Natural killer cell (primary cell): ENCODE measurements at regions of chr18 and their contacts with region 1.

Region 1: DNA sequence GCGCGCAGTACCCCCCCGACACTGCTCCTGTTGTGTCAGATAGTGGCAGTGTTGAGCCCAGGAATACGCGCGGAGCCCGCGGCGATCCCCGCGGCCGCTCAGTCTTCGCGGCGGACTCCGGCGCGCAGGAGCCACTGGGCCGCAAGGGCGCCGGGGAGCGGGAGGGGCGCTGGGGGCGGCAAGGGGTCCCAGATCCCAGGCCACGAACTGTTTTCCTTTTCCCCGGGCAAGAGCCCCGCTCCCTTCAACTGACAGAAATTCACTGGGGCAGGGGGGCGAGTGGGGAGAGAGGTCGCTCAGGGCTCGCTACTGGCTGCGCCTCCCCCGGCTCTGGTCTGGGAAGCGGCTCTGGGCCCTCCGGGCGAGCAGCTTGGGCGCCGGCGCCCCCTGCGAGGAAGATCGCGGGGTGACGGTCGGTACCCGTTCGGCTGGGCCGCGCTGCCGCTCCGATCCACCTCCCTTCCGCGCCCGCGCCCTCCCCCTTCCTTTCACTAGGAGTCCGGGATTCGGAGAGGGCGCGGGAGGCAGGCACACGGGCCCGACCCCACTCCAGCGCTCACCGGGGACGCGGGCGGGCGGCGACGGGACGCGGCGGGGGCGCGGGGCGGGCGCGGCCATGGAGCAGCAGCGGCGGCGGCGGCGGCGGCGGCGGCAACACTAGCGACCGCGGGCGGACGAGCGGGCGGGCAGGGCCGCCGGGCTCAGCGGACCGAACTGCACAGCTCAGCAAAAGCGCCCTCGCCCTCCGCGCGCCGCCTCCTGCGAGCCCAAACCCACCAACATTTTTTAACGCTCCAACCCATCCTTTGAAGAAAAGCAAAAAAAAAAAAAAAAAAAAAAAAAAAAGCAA is 1.4 kb upstream of the SETBP1 start:
- DNase-seq: peak; percentile 73 to 83
- ATAC-seq: peak; percentile 85 to 94 (median 90)
- H3K4me3 ChIP-seq: peak overlapping the region; percentile 76
- H3K4me3 Mint-ChIP-seq: no peak overlapping the region
- H3K27ac ChIP-seq: peak overlapping the region; percentile 87
- H3K27ac Mint-ChIP-seq: peak overlapping the region in 1 of 2 donors; percentile 39
- H3K4me1 ChIP-seq: peaks cover 19% of the 10 kb centered on the region
- H3K4me1 Mint-ChIP-seq: peaks cover 7 to 8% of the 10 kb centered on the region in 2 donors
- H3K27me3 ChIP-seq: no peaks in the 10 kb centered on the region
- H3K27me3 Mint-ChIP-seq: no peaks in the 10 kb centered on the region
- CTCF ChIP-seq: peak; percentile 66

Region 2: DNA sequence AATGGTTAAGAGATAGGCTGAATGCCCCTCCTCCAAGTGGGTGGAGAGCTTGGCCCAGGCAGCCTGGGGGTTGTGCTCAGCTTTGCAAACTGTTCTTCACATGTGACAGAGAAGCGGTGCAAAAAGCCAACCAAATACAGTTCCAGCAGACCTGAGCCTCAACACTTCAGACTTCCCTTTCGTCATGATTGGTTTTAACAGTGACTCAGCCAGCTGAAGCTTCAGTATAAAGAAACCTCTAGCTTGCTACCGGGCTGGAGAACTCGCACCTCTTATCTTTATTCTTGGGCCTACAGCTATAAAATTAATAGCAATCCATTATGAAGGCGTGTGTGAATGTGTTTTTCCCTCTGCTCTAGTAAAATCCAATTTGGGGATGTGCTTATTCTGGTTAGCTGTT is 21.4 kb after region 1 on chr18:
- intact Hi-C with region 1: loop called (anchors 2 kb)
- DNase-seq: peak; percentile 47 to 68
- ATAC-seq: peak; percentile 97 to 99 (median 97)
- H3K4me3 ChIP-seq: no peak overlapping the region
- H3K4me3 Mint-ChIP-seq: peak overlapping the region; percentile 54
- H3K27ac ChIP-seq: peak overlapping the region; percentile 73
- H3K27ac Mint-ChIP-seq: peak overlapping the region; percentile 86 to 90
- H3K4me1 ChIP-seq: peaks cover 15% of the 10 kb centered on the region
- H3K4me1 Mint-ChIP-seq: peaks cover 32 to 33% of the 10 kb centered on the region in 2 donors
- H3K27me3 ChIP-seq: no peaks in the 10 kb centered on the region
- H3K27me3 Mint-ChIP-seq: no peaks in the 10 kb centered on the region
- CTCF ChIP-seq: no peak

Region 3: DNA sequence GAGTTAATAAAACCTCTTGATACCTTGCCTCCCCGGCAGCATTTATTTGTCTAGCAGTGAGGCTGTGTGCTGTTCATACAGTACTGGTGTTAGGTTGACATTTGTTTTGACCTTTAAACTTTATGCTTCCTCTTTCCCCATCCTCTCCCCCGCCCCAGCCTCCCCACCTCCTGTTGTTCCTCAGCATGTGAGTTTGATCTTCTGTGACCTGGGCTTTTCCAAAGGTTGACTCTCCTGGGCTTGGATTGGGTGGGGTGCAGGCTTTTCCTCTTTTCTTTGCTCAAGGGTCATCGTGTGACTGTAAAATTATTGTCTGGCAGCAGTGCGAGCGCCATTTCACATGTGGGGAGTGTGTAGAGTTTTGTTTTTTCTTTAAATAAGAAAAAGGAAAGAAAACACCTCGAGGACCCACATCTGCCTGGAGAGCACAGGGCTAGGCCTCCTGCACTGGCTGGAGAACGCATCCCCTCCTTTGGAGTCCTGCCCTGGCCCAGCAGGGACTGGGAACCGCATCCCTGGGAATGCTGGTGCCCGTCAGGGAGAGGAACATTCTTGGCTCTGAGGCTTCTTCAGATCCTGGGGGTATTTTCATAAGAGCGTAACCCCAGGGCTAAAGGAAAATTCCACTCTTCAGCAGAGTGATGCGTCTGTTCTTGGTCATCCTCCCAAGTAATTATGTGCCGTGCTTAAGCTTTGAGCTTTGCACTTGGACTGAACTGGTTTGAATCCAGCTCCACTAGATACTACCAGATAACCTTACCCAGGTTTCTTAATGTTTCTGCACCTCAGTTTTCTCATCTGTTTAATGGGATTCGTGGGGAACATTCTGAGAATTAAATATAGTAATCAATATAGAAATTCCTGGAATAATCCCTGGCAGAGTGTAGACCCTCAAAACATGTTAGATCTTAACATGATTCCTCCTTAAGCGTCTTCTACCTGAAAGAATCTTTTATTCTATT is 93.0 kb after region 1 on chr18:
- intact Hi-C with region 1: no loop called
- DNase-seq: no peak
- ATAC-seq: no peak
- H3K4me3 ChIP-seq: no peak overlapping the region
- H3K4me3 Mint-ChIP-seq: no peak overlapping the region
- H3K27ac ChIP-seq: no peak overlapping the region
- H3K27ac Mint-ChIP-seq: no peak overlapping the region
- H3K4me1 ChIP-seq: peaks cover 3% of the 10 kb centered on the region
- H3K4me1 Mint-ChIP-seq: peaks cover 44 to 47% of the 10 kb centered on the region in 2 donors
- H3K27me3 ChIP-seq: no peaks in the 10 kb centered on the region
- H3K27me3 Mint-ChIP-seq: no peaks in the 10 kb centered on the region
- CTCF ChIP-seq: no peak

Region 4: DNA sequence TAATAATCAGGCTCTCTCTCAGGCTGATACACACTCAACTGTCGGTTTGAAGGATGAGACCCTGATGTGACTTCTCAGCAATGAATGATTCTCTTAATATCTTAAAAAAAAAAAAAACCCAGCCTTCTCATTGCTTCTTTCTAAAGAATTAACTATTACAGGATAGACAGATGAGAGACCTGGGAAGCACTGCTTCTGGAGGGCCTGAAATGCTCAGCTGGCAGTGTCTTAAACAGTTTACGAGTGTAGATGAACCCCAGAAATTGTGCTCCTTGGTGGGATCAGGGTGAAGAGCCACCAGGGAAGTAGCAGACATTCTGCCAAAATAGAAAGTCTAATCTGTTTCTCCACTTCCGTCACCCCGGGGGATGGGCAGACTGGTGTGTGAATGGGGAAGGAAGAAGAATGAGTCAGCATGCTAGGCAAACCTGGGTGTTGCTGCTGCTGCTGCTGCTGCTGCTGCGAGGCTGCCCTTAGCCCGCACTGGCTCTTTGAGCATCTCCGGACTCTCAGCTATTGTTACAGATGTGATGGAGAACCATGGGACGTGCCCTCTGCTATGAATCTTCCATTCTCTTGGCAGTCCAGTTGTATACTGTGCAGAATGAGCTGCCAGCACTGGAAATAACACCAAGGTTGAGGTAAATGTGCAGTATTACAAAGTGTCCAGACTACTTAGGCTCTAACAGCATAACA is 159.8 kb after region 1 on chr18:
- intact Hi-C with region 1: loop called (anchors 5 kb)
- DNase-seq: peak; percentile 70 to 73
- ATAC-seq: peak; percentile 94 to 97 (median 94)
- H3K4me3 ChIP-seq: no peak overlapping the region
- H3K4me3 Mint-ChIP-seq: peak overlapping the region; percentile 67
- H3K27ac ChIP-seq: peak overlapping the region; percentile 69
- H3K27ac Mint-ChIP-seq: peak overlapping the region; percentile 57 to 76
- H3K4me1 ChIP-seq: peaks cover 33% of the 10 kb centered on the region
- H3K4me1 Mint-ChIP-seq: peaks cover 68 to 75% of the 10 kb centered on the region in 2 donors
- H3K27me3 ChIP-seq: no peaks in the 10 kb centered on the region
- H3K27me3 Mint-ChIP-seq: peaks cover 0 to 2% of the 10 kb centered on the region in 2 donors
- CTCF ChIP-seq: no peak

Region 5: GRCh38 chr18:44887227-44887631 is 207.9 kb after region 1 on chr18:
- intact Hi-C with region 1: loop called (anchors 5 kb)
- DNase-seq: peak; percentile 22 to 50
- ATAC-seq: peak; percentile 93 to 96 (median 93)
- H3K4me3 ChIP-seq: no peak overlapping the region
- H3K4me3 Mint-ChIP-seq: peak overlapping the region; percentile 18
- H3K27ac ChIP-seq: peak overlapping the region; percentile 1
- H3K27ac Mint-ChIP-seq: peak overlapping the region; percentile 85 to 96
- H3K4me1 ChIP-seq: peaks cover 8% of the 10 kb centered on the region
- H3K4me1 Mint-ChIP-seq: peaks cover 25 to 30% of the 10 kb centered on the region in 2 donors
- H3K27me3 ChIP-seq: no peaks in the 10 kb centered on the region
- H3K27me3 Mint-ChIP-seq: no peaks in the 10 kb centered on the region
- CTCF ChIP-seq: no peak

Region 6: DNA sequence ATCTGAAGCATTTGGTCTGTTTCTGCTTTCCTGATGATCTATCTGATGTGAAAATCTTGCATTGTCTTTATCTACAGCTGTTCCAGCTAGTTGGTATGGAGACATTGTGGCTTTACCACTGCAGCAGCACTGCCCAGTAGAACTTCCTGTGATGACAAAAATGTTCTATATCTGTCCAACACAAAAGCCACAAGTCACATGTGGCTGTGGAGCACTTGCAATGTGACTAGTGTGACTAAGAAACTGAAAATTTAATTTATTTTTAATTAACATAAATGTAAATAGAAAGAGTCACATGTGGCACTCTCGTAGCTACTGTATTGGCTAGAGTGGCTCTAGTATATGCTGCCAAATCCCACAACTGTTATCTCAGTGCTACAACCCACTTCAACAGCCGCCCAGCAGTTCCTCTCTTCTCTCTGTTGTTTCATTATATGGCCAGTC is 427.1 kb after region 1 on chr18:
- intact Hi-C with region 1: loop called (anchors 2 kb)
- DNase-seq: peak; percentile 48 to 59
- ATAC-seq: peak; percentile 84 to 94 (median 92)
- H3K4me3 ChIP-seq: no peak overlapping the region
- H3K4me3 Mint-ChIP-seq: no peak overlapping the region
- H3K27ac ChIP-seq: peak overlapping the region; percentile 42
- H3K27ac Mint-ChIP-seq: no peak overlapping the region
- H3K4me1 ChIP-seq: peaks cover 35% of the 10 kb centered on the region
- H3K4me1 Mint-ChIP-seq: peaks cover 35 to 49% of the 10 kb centered on the region in 2 donors
- H3K27me3 ChIP-seq: no peaks in the 10 kb centered on the region
- H3K27me3 Mint-ChIP-seq: peaks cover 14 to 34% of the 10 kb centered on the region in 2 donors
- CTCF ChIP-seq: no peak

Region 7: GRCh38 chr18:45212181-45213039 is 533.1 kb after region 1 on chr18:
- intact Hi-C with region 1: loop called (anchors 1 kb)
- DNase-seq: peak; percentile 73 to 85
- ATAC-seq: peak; percentile 96 to 100 (median 100)
- H3K4me3 ChIP-seq: no peak overlapping the region
- H3K4me3 Mint-ChIP-seq: no peak overlapping the region
- H3K27ac ChIP-seq: no peak overlapping the region
- H3K27ac Mint-ChIP-seq: no peak overlapping the region
- H3K4me1 ChIP-seq: no peaks in the 10 kb centered on the region
- H3K4me1 Mint-ChIP-seq: peaks cover 5% of the 10 kb centered on the region in 2 donors
- H3K27me3 ChIP-seq: no peaks in the 10 kb centered on the region
- H3K27me3 Mint-ChIP-seq: peaks cover 0 to 10% of the 10 kb centered on the region in 2 donors
- CTCF ChIP-seq: peak; percentile 99